H1 (cell line): ENCODE measurements at regions of chr10 and their contacts with region 1.

Region 1: DNA sequence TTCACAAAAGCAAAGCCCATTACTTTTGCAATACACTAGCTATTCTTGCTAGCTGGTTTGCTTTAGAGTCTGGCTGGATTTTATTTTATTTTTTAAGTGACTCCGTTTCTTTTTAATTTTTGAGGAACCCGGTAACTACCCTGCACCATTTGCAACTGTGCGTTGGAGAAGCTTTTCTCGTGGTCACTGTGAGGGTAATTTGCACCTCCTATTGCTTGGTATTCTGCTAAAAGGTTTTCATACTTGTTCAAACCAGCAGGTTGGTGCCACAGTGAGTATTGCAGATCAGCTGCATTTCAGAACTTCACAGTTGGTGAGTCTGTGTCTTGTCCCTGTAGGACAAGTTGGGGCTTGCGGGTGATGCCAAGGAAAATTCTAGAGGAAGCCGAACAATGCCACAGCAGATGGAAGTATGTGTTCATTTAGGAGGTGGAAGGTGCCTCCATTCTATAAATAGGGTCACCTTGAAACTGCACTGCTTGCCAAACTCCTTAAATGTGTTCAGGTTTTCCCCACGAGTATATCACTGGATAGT is 3.9 kb upstream of the NMT2 start:
- DNase-seq: no peak
- H3K4me3 ChIP-seq: no peak overlapping the region
- H3K27ac ChIP-seq: no peak overlapping the region
- H3K4me1 ChIP-seq: peaks cover 0 to 2% (median under 1%) of the 10 kb centered on the region in 4 experiments; a peak in 2 of 7 replicates
- H3K27me3 ChIP-seq: no peaks in the 10 kb centered on the region; a peak in 2 of 7 replicates
- CTCF ChIP-seq: no peak
- EP300 ChIP-seq: no peak
- POLR2A ChIP-seq: no peak
- RAD21 ChIP-seq: no peak

Region 2: GRCh38 chr10:15182540-15183207 is 10.3 kb after region 1 on chr10:
- CTCF ChIA-PET with region 1: interaction called, 11 read pairs
- POLR2A ChIA-PET with region 1: interaction called, 3 read pairs
- DNase-seq: no peak
- H3K4me3 ChIP-seq: no peak overlapping the region
- H3K27ac ChIP-seq: no peak overlapping the region
- H3K4me1 ChIP-seq: no peaks in the 10 kb centered on the region
- H3K27me3 ChIP-seq: no peaks in the 10 kb centered on the region
- CTCF ChIP-seq: no peak
- EP300 ChIP-seq: no peak
- POLR2A ChIP-seq: no peak
- RAD21 ChIP-seq: no peak